Activated T-helper 1 cell treated with anti-CD3 and anti-CD28 coated beads, Interleukin-12 subunit alpha, Interleukin-12 subunit beta, Interleukin-2, Interleukin-4 antibody, amounts not matched to agents 30 ng/mL and 10 ng/mL and 1 ng/mL, durations not matched to agents 14 hours and 24 hours and 36 hours (primary cell): ENCODE measurements at regions of chr12 and their contacts with region 1.

Region 1: DNA sequence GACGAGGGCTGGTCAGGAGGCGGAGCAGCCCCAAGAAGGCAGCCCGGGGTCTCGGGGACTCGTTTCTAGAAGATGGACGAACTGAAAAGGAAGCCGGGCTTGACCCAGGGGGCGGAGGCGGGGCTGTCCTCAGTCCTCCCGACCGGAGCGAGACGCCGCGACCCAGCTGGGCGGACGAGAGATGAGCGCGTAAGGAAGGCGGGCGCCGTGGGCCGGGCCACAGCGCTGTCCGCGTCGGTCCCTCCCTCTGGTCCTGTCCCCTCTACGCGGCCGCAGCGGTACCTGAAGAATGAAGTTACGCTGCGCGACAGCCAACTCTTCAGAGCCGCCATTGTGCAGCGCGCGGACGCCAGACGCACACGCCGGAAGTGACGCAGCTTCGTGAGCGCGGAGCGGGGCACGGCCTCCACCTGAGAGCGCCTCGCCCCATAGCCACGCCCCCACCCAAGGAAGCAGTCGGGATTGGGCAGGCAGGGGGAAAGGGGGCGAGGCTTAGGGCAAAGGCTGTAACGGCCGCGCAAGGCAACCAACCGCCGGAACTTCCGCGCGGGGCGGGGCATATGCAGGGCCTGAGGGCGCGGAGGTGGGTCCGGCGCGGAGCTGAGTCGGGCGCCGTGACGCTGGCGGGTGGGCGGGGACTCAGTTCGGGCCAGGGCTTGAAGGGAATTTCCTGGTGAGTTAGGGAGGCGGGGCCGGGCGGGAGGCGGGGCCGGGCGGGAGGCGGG is at the start of gene DIABLO:
- DNase-seq: peak; percentile 100
- H3K4me3 Mint-ChIP-seq: peak within 1 kb of the TSS; percentile 91
- H3K27ac Mint-ChIP-seq: peak within 1 kb of the TSS; percentile 90
- H3K4me1 Mint-ChIP-seq: peaks cover 32% of the 10 kb centered on the region
- H3K27me3 Mint-ChIP-seq: no peaks in the 10 kb centered on the region
- total RNA-seq, gene DIABLO: 58.1 and 59.2 TPM in 2 replicates

Region 2: DNA sequence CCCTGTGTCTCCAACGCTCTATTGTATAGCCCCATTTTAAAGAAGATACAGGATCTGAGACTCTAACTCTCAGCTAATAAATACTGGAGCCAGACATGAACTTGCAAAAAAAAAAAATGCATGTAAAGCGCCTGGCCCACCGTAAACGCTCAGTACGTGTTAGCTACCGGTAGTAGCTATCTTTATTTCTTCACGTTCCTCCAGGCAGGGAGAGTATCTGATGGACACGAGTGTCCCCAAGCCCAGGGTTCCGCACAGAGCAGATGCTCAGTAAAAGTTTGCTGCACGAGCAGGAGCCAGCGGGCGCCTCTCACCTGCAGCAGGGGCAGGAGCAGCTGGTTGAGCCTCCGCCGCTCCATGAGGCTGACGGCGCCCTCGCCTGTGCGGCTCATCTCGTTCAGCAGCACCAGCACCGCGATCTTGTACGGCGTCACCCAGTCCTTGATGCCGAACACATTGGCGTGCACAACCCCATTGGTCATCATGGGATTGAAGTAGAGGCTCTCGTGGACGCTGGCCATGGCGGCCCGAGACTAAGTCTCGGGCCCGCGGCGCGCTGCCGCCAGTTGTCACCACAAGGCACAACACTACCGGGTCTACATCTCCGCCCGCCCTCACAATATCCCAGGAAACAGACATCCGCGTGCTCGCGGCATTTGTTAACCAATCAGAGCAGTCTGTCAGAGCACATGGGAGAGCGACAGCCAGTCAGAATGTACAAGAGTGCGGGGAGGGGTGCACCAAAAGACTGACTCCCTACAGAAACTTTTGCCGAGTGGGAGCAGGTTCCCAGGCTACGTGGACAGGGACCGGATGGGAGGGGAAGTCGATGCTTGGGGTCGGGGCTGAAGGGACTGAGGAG is 873.8 kb before region 1 on chr12 and contains the start of gene ANAPC5:
- intact Hi-C with region 1: loop called (anchors 1 kb)
- DNase-seq: peak; percentile 90
- H3K4me3 Mint-ChIP-seq: peak within 1 kb of the TSS; percentile 95
- H3K27ac Mint-ChIP-seq: peak within 1 kb of the TSS; percentile 98
- H3K4me1 Mint-ChIP-seq: peaks cover 33% of the 10 kb centered on the region
- H3K27me3 Mint-ChIP-seq: peaks cover 10% of the 10 kb centered on the region
- total RNA-seq, gene ANAPC5: 139 and 144 TPM in 2 replicates

Region 3: DNA sequence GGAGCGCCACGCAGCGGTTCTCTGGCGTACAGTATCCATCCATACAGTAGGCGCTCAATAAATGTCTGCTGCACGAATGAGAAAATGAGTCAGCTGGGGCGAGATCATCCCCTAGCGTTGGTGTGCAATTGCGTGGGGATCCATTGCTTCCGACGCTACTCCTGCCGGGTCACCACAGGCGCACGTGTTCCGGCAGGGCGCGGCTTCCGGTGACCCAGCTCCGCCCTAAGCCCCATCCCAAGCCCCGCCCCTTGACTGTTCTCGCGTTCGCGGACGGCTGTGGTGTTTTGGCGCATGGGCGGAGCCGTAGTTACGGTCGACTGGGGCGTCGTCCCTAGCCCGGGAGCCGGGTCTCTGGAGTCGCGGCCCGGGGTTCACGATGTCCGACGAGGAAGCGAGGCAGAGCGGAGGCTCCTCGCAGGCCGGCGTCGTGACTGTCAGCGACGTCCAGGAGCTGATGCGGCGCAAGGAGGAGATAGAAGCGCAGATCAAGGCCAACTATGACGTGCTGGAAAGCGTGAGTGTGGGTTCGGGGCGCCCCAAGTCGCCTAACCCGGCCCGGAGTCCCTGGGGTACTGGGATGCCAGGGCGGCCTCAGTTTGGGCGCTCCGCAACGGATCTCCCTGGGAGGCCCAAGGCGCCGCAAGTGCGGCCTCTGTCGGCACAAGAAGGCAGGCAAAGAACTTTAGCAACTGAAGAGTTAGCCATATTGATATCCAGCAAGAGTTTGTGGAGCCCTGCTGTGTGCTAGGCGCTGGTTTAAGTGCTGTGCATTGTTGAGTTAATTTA is 337.2 kb before region 1 on chr12 and contains the start of gene PSMD9:
- intact Hi-C with region 1: loop called (anchors 1 kb)
- DNase-seq: peak; percentile 98
- H3K4me3 Mint-ChIP-seq: peak within 1 kb of the TSS; percentile 99
- H3K27ac Mint-ChIP-seq: peak within 1 kb of the TSS; percentile 99
- H3K4me1 Mint-ChIP-seq: peaks cover 35% of the 10 kb centered on the region
- H3K27me3 Mint-ChIP-seq: peaks cover 2% of the 10 kb centered on the region
- total RNA-seq, gene PSMD9: 63.9 and 67.5 TPM in 2 replicates

Region 4: DNA sequence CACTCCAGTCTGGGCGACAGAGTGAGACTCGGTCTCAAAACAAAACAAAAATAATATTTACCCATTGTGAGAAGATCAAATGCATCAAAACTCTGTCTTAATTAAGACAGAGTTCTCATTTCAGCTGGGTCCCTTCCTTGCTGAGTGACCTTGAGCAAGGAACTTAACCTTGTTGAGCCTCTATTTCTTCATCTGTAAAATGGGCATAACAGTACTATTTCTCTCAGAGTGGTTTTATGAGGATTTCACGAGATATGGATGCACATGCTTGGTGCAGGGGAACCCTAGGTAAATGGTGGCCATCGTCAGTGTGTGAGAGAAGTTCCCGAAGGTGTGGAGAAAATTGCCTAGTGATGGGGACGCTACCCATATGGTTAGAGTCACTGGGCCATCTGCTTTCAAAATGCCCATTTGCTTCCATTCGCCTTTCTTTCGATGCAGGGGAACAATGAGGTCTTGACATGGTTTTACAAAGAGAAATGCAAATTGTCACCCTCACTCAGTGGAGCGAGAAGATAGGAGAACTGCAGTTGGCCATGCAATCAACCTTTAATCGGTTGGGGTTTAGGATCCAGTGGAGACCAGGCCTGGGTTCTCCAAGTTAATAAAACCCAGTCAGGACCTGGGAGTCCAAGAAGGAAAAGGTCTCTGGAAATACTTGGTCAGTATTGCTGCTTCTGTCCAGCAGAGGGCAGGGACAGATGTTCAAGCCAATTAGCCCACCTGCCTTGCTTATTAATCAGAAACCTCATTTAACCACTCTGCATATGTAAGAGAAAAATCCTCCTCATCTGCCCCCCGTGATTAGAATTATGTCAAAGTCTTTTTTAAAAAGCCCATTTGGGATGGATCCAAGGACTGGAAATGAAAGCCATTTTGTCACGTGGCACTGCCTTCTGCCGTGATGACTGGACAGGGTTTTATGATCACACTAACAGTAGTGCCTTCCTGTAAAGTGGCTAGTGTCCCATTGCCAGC is 270.3 kb before region 1 on chr12:
- intact Hi-C with region 1: no loop called
- DNase-seq: no peak
- H3K4me3 Mint-ChIP-seq: no peak overlapping the region
- H3K27ac Mint-ChIP-seq: no peak overlapping the region
- H3K4me1 Mint-ChIP-seq: no peaks in the 10 kb centered on the region
- H3K27me3 Mint-ChIP-seq: peaks cover 10% of the 10 kb centered on the region

Region 5: DNA sequence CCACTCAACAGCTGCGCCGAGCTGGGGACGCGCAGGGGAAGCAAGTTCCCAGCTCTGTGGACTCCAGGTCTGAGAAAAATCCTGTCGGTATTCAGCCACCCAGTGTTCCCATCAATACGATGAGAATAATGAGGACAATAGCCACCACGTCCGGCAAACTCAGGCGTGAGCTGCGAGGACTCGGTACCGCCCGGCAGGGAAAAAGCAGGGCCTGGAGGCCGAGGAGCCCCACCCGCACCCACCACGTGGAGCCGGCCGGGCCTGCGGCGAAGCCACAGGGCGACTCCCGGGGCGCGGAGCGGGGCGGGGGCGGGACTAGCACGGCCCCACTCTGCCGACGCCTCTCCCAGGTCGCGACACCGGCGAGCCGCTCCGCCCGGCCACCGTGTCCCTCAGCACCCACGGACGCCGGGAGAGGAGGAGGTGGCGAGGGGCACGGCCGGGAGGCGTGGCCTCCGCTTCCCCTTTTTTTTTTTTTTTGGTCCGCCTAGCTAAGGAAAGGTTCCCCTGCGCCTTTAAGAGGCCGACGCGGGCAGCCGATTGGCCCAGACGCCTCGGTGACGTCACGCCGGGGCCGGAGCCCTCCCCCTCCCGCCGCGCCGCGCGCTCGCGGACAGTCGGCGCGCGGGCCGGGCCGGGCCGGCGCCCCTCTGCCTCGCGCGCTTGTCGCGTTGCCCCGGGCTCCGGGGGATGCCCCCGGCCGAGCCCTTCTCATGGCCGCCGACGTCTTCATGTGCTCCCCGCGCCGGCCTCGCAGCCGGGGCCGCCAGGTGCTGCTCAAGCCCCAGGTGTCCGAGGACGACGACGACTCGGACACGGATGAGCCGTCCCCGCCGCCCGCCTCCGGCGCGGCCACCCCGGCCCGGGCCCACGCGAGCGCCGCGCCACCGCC is 147.5 kb before region 1 on chr12 and contains the start of gene MLXIP:
- intact Hi-C with region 1: loop called (anchors 1 kb)
- DNase-seq: peak; percentile 88
- H3K4me3 Mint-ChIP-seq: peak within 1 kb of the TSS; percentile 94
- H3K27ac Mint-ChIP-seq: peak within 1 kb of the TSS; percentile 76
- H3K4me1 Mint-ChIP-seq: peaks cover 44% of the 10 kb centered on the region
- H3K27me3 Mint-ChIP-seq: peaks cover 6% of the 10 kb centered on the region
- total RNA-seq, gene MLXIP: 59.0 and 62.1 TPM in 2 replicates

Region 6: DNA sequence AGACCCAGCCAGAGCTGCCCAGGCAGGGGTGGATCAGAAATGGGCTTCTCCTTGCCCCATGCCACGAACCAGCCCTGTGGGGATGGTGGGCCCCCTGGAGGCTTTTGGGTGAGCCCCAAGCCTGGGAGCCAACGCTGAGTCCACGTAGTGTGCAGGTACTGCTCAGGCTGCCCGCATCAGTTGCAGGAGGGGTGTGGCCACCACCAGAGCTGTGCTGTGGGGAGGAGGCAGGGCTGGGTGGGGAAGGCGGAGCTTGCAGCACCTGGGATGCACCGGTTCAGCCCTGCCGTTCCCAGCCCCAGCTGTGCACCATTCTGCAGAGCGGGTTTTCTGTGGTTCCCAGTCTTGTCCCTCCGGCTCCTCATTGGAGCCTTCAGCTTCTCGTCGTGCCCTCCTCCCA is 88.2 kb before region 1 on chr12:
- intact Hi-C with region 1: no loop called
- DNase-seq: no peak
- H3K4me3 Mint-ChIP-seq: no peak overlapping the region
- H3K27ac Mint-ChIP-seq: no peak overlapping the region
- H3K4me1 Mint-ChIP-seq: no peaks in the 10 kb centered on the region
- H3K27me3 Mint-ChIP-seq: no peaks in the 10 kb centered on the region

Region 7: GRCh38 chr12:122265931-122266771 is 40.3 kb after region 1 on chr12 and contains the start of gene VPS33A:
- intact Hi-C with region 1: loop called (anchors 1 kb)
- DNase-seq: peak; percentile 95
- H3K4me3 Mint-ChIP-seq: peak within 1 kb of the TSS; percentile 94
- H3K27ac Mint-ChIP-seq: peak within 1 kb of the TSS; percentile 99
- H3K4me1 Mint-ChIP-seq: peaks cover 22% of the 10 kb centered on the region
- H3K27me3 Mint-ChIP-seq: no peaks in the 10 kb centered on the region
- total RNA-seq, gene VPS33A: 25.6 and 28.7 TPM in 2 replicates

Region 8: DNA sequence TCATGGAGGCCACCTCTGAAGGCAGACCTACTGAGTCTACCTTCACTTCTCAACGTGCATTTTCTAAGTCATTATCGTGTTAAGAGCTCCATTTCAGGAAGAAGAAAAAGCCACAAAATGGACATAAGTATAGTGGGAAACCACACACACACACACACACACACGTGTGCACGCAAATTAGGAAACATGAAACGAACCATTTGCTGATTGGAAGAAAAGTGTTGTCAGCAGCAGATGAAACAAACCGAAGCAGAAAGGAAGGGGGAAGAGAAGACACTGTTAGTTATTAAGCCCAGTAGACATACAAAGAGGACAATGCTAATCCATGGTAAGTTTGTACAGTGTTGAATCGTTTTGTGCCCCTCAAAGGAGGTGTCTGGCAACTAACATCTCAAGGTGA is 50.4 kb after region 1 on chr12:
- intact Hi-C with region 1: no loop called
- DNase-seq: no peak
- H3K4me3 Mint-ChIP-seq: no peak overlapping the region
- H3K27ac Mint-ChIP-seq: no peak overlapping the region
- H3K4me1 Mint-ChIP-seq: no peaks in the 10 kb centered on the region
- H3K27me3 Mint-ChIP-seq: no peaks in the 10 kb centered on the region

Region 9: GRCh38 chr12:122293081-122293480 is 67.2 kb after region 1 on chr12:
- intact Hi-C with region 1: no loop called
- DNase-seq: no peak
- H3K4me3 Mint-ChIP-seq: no peak overlapping the region
- H3K27ac Mint-ChIP-seq: no peak overlapping the region
- H3K4me1 Mint-ChIP-seq: peaks cover 10% of the 10 kb centered on the region
- H3K27me3 Mint-ChIP-seq: no peaks in the 10 kb centered on the region

Region 10: GRCh38 chr12:122526683-122527477 is 301.0 kb after region 1 on chr12 and contains the starts of genes KNTC1 and RSRC2:
- intact Hi-C with region 1: loop called (anchors 1 kb)
- DNase-seq: peak; percentile 99
- H3K4me3 Mint-ChIP-seq: no peak within 1 kb of the TSS
- H3K27ac Mint-ChIP-seq: no peak within 1 kb of the TSS
- H3K4me1 Mint-ChIP-seq: peaks cover 43% of the 10 kb centered on the region
- H3K27me3 Mint-ChIP-seq: no peaks in the 10 kb centered on the region
- total RNA-seq, gene KNTC1: 122 and 126 TPM in 2 replicates
- total RNA-seq, gene RSRC2: 101 and 103 TPM in 2 replicates